GM10248 (cell line): ENCODE measurements at regions of chr11 and their contacts with region 1.

Region 1: DNA sequence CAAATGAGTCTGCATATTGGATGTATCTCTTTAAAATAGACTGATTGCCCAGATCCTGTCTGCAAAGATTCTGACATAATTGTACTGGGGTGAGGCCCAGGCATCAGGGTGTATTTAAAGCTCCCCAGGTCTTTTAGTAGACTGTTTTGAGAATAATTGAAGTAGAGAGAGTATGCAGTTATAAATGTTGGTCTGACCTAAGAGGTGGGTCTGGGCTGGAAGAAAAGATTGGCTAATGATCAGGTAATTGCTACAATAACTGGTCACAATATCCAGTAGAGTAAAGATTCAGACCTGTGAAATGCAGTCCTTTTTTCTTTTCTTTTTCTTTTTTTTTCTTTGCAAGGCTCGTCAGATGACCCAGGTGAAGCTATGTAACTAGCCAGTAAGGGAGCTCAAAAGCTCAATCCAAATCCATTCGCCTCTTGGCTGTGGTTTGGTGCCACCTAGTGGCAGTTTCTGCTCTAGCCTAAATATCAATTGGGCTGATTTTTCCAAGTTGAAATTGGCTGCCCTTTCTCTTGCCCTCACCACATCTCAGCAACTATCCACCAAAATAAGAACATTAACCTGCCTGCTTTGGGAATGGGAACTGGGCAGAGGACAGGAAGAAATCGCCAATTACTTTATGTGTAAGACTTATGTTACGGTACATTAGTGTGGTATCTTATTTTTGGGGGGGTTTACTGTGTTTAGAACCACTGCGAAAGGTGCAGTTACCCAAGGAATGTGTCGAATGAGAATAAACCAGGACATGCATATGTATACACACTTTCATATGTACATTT is 45.9 kb downstream of the ZNF143 start:
- DNase-seq: peak; percentile 70
- CTCF ChIP-seq: peak; percentile 80

Region 2: DNA sequence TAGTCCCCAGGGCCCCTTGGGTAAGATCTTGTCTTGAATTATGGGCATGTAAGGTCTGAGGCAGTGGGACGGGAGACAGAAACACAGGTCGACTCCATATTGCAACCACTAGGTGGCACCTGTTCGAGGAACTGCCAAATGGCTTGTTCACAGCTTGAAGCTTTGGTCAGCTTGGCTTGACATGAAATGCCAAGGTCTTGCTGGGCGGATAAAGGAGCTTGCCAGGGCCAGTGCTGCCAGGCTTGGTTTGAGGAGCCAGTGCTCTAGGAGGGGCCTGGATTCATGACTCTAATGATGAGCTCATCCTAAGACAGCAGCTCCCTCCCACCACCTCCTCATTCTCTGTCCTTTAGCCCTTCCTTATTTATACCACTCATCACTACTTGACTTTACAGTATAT is 491.0 kb before region 1 on chr11:
- CTCF ChIA-PET with region 1: interaction called, 30 read pairs
- POLR2A ChIA-PET with region 1: no interaction called
- DNase-seq: peak; percentile 80
- CTCF ChIP-seq: peak; percentile 79

Region 3: DNA sequence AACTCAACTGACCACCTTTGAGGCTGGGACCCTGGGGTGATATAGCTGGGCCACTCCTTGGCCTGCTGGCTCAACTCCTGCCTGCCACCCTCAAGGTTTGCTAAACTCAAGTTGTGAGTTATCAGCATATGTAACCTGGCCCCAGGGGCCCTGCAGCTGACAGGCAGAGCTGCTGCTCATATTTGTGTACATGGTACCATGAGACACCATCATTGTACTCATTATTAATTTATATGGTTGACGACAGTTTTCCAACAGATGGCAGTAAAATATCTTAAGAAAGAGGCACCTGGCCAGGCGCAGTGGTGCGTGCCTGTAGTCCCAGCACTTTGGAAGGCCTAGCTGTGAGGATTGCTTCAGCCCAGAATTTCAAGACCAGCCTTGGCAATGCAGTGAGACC is 230.2 kb before region 1 on chr11:
- CTCF ChIA-PET with region 1: interaction called, 14 read pairs
- POLR2A ChIA-PET with region 1: no interaction called
- DNase-seq: no peak
- CTCF ChIP-seq: no peak

Region 4: DNA sequence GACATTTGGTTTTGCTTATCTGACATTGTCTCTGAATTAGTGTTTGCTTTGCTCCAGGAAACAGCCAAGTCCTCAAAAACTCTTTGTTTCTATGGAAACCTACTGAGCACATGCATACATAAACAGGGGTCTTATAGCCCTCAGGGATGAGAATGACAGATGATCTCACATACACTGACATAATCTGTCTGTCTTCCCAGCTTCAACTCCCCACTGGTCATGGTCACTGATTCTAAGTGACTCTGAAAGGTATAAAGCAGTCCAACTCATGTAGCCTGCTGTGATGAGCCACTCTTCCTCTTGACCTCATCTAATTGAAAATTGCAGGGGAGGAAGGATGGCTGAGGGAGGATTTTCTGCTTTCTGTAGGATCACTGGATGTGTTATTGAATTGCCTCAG is 33.3 kb before region 1 on chr11:
- CTCF ChIA-PET with region 1: interaction called, 13 read pairs
- POLR2A ChIA-PET with region 1: no interaction called
- DNase-seq: no peak
- CTCF ChIP-seq: no peak

Region 5: GRCh38 chr11:9489080-9489765 is 17.5 kb before region 1 on chr11:
- CTCF ChIA-PET with region 1: interaction called, 112 read pairs
- POLR2A ChIA-PET with region 1: no interaction called
- DNase-seq: no peak
- CTCF ChIP-seq: no peak

Region 6: DNA sequence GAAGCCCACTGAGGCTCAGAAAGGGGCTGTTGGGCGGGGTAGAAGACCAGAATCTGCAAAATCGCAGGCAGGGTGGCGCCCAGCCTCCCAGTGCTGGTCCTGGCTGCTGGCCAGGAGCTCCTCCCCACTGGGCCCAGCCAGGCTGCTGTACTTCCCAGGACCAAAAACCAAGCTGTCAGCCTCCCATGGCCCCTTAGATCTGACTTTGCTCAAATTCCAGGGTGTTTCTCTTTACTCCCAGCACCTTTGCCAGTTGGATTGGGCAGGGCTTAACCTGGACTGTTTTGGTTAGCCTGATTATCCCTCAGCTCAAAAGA is 22.6 kb after region 1 on chr11:
- CTCF ChIA-PET with region 1: interaction called, 17 read pairs
- POLR2A ChIA-PET with region 1: no interaction called
- DNase-seq: no peak
- CTCF ChIP-seq: no peak